Panc1 (cell line): ENCODE measurements at regions of chr5 and their contacts with region 1.

Region 1: DNA sequence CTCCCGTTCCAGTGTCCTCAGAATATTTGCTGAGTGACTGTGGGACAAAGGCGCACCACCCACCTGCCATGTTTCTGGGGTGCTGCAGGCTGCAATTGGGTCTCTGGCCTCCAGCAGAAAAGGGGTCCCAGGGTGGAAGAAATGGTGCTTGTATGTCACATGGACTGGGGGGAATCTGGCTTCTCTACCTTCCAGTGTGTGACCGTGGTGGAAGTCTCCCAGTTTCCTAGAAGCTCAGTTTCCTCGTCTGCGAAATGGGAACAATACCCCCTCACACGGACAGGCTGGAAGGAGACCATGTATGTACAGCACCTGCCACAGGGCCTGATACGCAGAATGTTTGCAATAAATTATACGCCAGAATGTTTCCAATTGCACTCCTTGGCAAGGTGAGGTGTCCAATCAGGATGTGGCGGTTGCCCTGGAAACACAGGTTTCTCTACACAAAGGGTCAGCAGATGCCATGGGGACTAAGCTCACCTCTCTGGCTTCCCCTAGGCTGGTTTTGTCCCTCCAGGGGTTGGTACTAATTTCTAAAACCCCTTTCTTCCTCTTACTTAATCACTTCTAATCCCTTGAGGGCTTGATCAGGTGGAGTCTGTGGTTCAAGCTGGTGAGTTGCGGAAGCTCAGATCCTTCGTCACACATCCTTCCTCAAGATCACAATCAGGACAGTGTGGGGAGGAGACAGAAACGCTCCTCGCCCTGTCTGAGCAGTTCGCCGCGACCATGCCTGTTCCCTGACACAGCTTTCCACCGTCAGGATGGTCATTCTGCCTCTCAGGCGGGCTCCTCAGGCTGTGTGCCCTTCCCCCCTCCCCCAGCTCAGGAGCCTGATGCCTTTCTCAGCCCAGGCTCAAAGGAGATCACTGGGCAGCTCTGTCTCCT is 24.1 kb downstream of the CPLX2 start:
- DNase-seq: no peak
- ATAC-seq: no peak
- H3K4me3 ChIP-seq: no peak overlapping the region
- H3K27ac ChIP-seq: no peak overlapping the region
- H3K4me1 ChIP-seq: no peaks in the 10 kb centered on the region
- H3K27me3 ChIP-seq: no peaks in the 10 kb centered on the region
- CTCF ChIP-seq: no peak

Region 2: GRCh38 chr5:175460132-175460531 is 435.3 kb before region 1 on chr5:
- CTCF ChIA-PET with region 1: no interaction called
- POLR2A ChIA-PET with region 1: no interaction called
- in situ Hi-C with region 1: no loop called
- intact Hi-C with region 1: no loop called
- DNase-seq: no peak
- ATAC-seq: no peak
- H3K4me3 ChIP-seq: no peak overlapping the region
- H3K27ac ChIP-seq: no peak overlapping the region
- H3K4me1 ChIP-seq: no peaks in the 10 kb centered on the region
- H3K27me3 ChIP-seq: 0 out of 2 replicates have a peak, but pooled peaks cover 3% of the 10 kb centered on the region
- CTCF ChIP-seq: peak; percentile 70; the same call in 1 of the 2 replicates

Region 3: GRCh38 chr5:175567954-175568353 is 327.5 kb before region 1 on chr5:
- CTCF ChIA-PET with region 1: no interaction called
- POLR2A ChIA-PET with region 1: no interaction called
- in situ Hi-C with region 1: no loop called
- intact Hi-C with region 1: no loop called
- DNase-seq: no peak
- ATAC-seq: no peak
- H3K4me3 ChIP-seq: no peak overlapping the region
- H3K27ac ChIP-seq: no peak overlapping the region
- H3K4me1 ChIP-seq: no peaks in the 10 kb centered on the region
- H3K27me3 ChIP-seq: peaks cover 26% of the 10 kb centered on the region
- CTCF ChIP-seq: no peak

Region 4: GRCh38 chr5:175878544-175879327 is 16.7 kb before region 1 on chr5:
- CTCF ChIA-PET with region 1: no interaction called
- POLR2A ChIA-PET with region 1: interaction called, 10 read pairs
- in situ Hi-C with region 1: no loop called
- intact Hi-C with region 1: no loop called
- DNase-seq: no peak
- ATAC-seq: no peak
- H3K4me3 ChIP-seq: no peak overlapping the region
- H3K27ac ChIP-seq: no peak overlapping the region
- H3K4me1 ChIP-seq: no peaks in the 10 kb centered on the region
- H3K27me3 ChIP-seq: peaks cover 3% of the 10 kb centered on the region; the same call in 1 of the 2 replicates
- CTCF ChIP-seq: no peak